GM12878 (cell line): ENCODE measurements at regions of chr12 and their contacts with region 1.

Region 1: DNA sequence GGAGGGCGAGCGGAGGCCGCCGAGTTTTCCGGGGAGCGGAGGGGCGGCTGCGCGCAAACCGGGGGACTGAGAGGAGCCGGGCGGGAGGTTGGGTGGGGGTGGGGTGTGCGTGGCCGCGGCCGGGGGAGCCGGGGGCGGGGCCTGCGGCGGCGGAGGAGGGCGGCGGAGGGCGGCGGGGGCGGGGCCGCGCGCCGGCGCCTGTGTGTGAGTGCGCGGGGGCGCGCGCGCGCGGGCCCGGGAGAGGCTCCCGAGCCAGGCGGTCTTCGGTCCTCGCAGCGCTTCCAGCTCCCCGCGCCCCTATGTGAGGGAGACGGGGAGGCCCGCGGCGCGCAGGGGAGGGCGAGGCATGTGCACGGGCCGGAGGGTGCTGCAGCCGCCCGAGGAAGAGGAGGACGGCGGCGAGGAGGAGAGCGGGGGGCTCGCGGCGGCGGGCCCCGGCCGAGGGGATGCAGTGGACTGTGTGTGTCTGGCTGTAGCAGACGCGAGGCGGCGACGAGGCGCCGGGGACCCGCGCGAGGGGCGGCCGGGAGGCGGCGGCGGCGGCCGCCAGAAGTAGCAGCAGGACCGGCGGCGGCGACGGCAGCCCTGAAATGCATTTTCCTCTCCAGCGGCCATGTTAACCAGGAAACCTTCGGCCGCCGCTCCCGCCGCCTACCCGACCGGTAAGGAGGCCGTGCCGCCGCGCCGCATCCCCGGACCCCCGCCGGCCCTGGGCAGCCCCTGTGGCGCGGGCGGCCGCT is at the start of gene DYRK2:
- DNase-seq: no peak
- ATAC-seq: peak; percentile 56
- H3K4me3 ChIP-seq: peak within 1 kb of the TSS; percentile 100
- H3K27ac ChIP-seq: peak within 1 kb of the TSS; percentile 70
- H3K4me1 ChIP-seq: peaks cover 6% of the 10 kb centered on the region
- H3K27me3 ChIP-seq: no peaks in the 10 kb centered on the region
- CTCF ChIP-seq: 0 out of 6 replicates have a peak, but pooled peaks of 1 of the 3 experiments have one; percentile 3
- EP300 ChIP-seq: no peak
- POLR2A ChIP-seq: peak; percentile 94
- RAD21 ChIP-seq: no peak
- polyA plus RNA-seq, gene DYRK2: 3.1 to 3.2 TPM

Region 2: GRCh38 chr12:67452119-67452805 is 196.4 kb before region 1 on chr12:
- CTCF ChIA-PET with region 1: no interaction called
- POLR2A ChIA-PET with region 1: no interaction called
- RAD21 ChIA-PET with region 1: no interaction called
- SMC1A ChIA-PET with region 1: no interaction called
- in situ Hi-C with region 1: no loop called
- intact Hi-C with region 1: loop called (anchors 5 kb)
- DNase-seq: peak; percentile 96
- ATAC-seq: peak; percentile 90
- H3K4me3 ChIP-seq: no peak overlapping the region
- H3K27ac ChIP-seq: peak overlapping the region; percentile 25; the same call in 1 of the 2 replicates
- H3K4me1 ChIP-seq: peaks cover 53% of the 10 kb centered on the region
- H3K27me3 ChIP-seq: no peaks in the 10 kb centered on the region
- CTCF ChIP-seq: no peak
- EP300 ChIP-seq: peak; percentile 57 to 84; a peak in 3 of 4 replicates
- POLR2A ChIP-seq: no peak
- RAD21 ChIP-seq: peak; percentile 10; the same call in 1 of the 2 replicates